Activated T-helper 2 cell treated with anti-CD3 and anti-CD28 coated beads, Interferon-gamma antibody, Interleukin-2, Interleukin-4, amounts not matched to agents 10 μg/mL and 5 μg/mL and 100 μg/mL, durations not matched to agents 14 hours and 24 hours and 36 hours (primary cell): ENCODE measurements at regions of chr10 and their contacts with region 1.

Region 1: GRCh38 chr10:114470956-114471905 is 66.9 kb upstream of the AFAP1L2 start:
- DNase-seq: peak; percentile 48
- H3K4me3 Mint-ChIP-seq: no peak overlapping the region
- H3K27ac Mint-ChIP-seq: no peak overlapping the region
- H3K4me1 Mint-ChIP-seq: peaks cover 15% of the 10 kb centered on the region
- H3K27me3 Mint-ChIP-seq: no peaks in the 10 kb centered on the region

Region 2: GRCh38 chr10:113169853-113170460 is 1301.3 kb before region 1 on chr10:
- intact Hi-C with region 1: no loop called
- DNase-seq: no peak
- H3K4me3 Mint-ChIP-seq: no peak overlapping the region
- H3K27ac Mint-ChIP-seq: no peak overlapping the region
- H3K4me1 Mint-ChIP-seq: peaks cover 6% of the 10 kb centered on the region
- H3K27me3 Mint-ChIP-seq: peaks cover 8% of the 10 kb centered on the region

Region 3: DNA sequence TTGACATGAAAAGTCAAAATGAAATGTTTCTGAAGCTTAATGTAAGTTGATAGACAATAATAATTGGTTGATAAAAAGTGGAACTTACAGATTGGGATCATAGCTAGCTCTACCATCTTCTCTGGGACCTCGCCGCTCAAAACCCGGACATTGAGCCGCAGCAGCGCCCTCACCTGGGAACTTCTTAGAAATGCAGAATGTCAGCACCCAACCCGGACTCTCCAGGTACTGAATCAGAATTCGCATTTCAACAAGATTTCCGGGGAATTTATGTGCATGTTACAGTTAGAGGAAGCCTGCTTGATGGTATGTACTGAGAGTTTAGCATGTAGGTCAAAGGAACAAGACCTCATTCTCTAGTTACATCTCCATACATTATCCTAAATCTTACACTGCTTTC is 223.5 kb after region 1 on chr10:
- intact Hi-C with region 1: loop called (anchors 2 kb)
- DNase-seq: no peak
- H3K4me3 Mint-ChIP-seq: no peak overlapping the region
- H3K27ac Mint-ChIP-seq: no peak overlapping the region
- H3K4me1 Mint-ChIP-seq: peaks cover 11% of the 10 kb centered on the region
- H3K27me3 Mint-ChIP-seq: peaks cover 27% of the 10 kb centered on the region

Region 4: GRCh38 chr10:114779803-114780609 is 308.8 kb after region 1 on chr10:
- intact Hi-C with region 1: loop called (anchors 5 kb)
- DNase-seq: no peak
- H3K4me3 Mint-ChIP-seq: no peak overlapping the region
- H3K27ac Mint-ChIP-seq: no peak overlapping the region
- H3K4me1 Mint-ChIP-seq: peaks cover 12% of the 10 kb centered on the region
- H3K27me3 Mint-ChIP-seq: peaks cover 28% of the 10 kb centered on the region